Left ventricle myocardium inferior (tissue), 1 donor: ENCODE measurements at regions of chr12 and their contacts with region 1.

Region 1: DNA sequence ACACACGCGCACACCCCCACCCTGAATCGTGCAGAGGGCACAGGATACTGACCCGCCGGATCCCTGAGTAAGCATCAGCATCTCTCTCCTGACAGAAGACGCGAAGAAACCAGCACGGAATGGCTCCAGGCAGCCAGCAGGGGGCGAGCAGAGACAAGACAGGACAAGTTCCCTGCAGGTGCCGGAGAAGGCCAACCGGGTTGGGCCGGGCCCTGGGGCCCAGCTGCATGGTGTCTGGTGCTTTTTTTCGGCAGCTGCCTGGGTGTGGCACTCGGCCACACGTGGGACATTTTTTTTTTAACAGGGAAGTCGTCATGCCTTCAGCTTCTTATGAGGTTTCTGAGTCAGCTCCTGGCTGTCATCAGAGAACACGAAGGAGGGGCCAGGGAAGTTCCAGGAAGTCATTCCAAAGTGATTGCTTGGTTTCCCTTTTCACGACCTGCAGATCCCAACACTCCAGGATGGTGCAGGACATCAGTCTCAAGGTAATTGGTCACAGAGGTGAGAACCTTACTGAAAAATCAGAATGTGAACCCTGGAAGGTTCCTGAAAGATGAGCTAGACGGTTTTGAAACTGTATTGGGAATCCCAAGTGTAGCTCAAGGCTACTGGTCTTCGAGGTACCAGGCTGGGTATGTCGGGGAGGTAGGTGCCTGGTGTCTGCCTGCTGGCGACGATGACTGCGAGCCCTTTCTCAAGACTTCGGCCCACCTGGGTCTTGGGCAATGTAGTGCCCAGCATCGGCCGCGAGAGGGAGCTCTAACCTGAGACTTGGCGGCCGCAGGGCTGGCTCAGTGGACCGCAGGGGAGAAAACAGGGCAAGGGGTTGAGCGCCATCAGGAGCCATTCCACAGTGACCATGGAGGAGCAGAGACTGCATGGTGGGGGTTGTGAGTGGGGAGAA is 190.8 kb upstream of the PRMT8 start:
- DNase-seq: peak; percentile 90
- H3K4me3 ChIP-seq: peak overlapping the region; percentile 40
- H3K27ac ChIP-seq: peak overlapping the region; percentile 58
- H3K4me1 ChIP-seq: peaks cover 33% of the 10 kb centered on the region
- H3K27me3 ChIP-seq: no peaks in the 10 kb centered on the region
- CTCF ChIP-seq: peak; percentile 89

Region 2: GRCh38 chr12:3445119-3445978 is 145.2 kb after region 1 on chr12:
- intact Hi-C with region 1: no loop called
- DNase-seq: no peak
- H3K4me3 ChIP-seq: no peak overlapping the region
- H3K27ac ChIP-seq: no peak overlapping the region
- H3K4me1 ChIP-seq: no peaks in the 10 kb centered on the region
- H3K27me3 ChIP-seq: peaks cover 22% of the 10 kb centered on the region
- CTCF ChIP-seq: no peak

Region 3: DNA sequence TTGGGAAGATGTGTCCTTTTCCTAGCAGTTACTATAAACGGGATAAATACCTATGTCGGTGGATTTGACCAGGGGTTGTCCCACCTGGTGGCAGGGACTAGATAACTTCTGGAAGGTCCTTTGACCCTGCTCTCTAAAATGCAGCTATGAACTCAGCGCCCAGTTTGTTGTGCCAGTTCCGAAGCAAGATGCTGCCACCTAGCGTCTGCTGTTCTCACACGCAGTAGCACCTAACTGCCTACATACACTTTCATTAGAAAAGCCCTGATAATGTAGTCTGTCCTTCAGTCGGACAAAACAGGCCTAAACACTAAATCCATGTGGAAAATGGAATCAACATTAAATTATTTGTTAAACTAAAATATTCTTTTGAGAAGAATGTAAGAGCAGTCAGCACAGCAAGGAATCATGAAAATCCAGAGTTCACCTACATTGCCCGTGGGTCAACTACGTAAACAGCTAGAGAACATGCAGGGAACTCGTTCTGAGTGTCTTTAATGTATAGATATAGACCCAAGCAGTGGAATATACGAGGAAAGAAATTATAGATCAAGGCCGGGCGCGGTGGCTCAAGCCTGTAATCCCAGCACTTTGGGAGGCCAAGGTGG is 503.8 kb after region 1 on chr12:
- intact Hi-C with region 1: loop called (anchors 10 kb)
- DNase-seq: peak; percentile 70
- H3K4me3 ChIP-seq: no peak overlapping the region
- H3K27ac ChIP-seq: no peak overlapping the region
- H3K4me1 ChIP-seq: no peaks in the 10 kb centered on the region
- H3K27me3 ChIP-seq: no peaks in the 10 kb centered on the region
- CTCF ChIP-seq: peak; percentile 89